ENCODE measurements at regions of chr17 and their contacts with region 1.

Region 1: GRCh38 chr17:48107168-48108132 is at the start of gene SNX11:
- DNase-seq: peak; percentile 93
- H3K4me3 Mint-ChIP-seq: peak within 1 kb of the TSS; percentile 94
- H3K27ac Mint-ChIP-seq: peak within 1 kb of the TSS; percentile 85
- H3K4me1 Mint-ChIP-seq: peaks cover 73% of the 10 kb centered on the region
- H3K27me3 Mint-ChIP-seq: no peaks in the 10 kb centered on the region
- total RNA-seq, gene SNX11: 22.6 to 22.8 TPM

Region 2: GRCh38 chr17:48131216-48131824 is 23.9 kb after region 1 on chr17:
- CTCF ChIA-PET with region 1: interaction called, 29 read pairs
- POLR2A ChIA-PET with region 1: interaction called, 3 read pairs
- DNase-seq: peak; percentile 41
- H3K4me3 Mint-ChIP-seq: no peak overlapping the region
- H3K27ac Mint-ChIP-seq: no peak overlapping the region
- H3K4me1 Mint-ChIP-seq: no peaks in the 10 kb centered on the region
- H3K27me3 Mint-ChIP-seq: no peaks in the 10 kb centered on the region

Measured in activated CD4-positive, alpha-beta memory T cell treated with anti-CD3 and anti-CD28 coated beads, Interleukin-2, amount 10 ng/mL, durations not matched to agents 7 days and 5 days (primary cell).